IMR-90 (cell line): ENCODE measurements at regions of chr10 and their contacts with region 1.

Region 1: DNA sequence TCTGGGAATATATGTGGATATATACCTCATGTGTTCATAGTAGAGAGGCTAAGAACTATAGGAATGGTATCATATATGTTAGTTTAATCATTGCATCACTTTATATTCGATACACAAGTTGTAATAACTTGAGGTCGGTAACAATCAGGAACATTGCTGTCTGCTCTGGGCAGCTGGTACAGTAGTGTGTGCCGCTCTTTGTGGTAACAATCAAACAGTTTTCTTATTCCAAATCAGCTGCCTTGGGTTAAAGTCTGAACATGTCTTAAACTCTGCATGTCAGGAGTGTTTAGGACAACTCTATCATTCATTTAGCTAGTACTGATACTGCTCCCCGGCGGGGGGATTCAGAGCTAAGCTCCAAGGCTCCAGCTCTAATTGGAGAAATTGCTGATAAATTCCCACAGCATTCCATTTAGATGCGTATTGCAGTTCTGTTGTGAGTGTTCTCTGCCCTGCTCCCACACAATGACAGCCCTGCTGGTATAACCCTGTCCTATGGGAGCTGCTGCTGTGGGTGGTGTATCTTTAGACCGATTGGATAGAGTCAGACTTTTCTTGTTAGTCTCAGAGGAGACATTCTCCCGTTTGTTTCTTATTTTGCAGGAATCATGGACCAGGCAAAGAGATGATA is 707.5 kb upstream of the FZD8 start:
- DNase-seq: peak; percentile 91
- ATAC-seq: peak; percentile 100
- H3K4me3 ChIP-seq: no peak overlapping the region
- H3K27ac ChIP-seq: no peak overlapping the region
- H3K4me1 ChIP-seq: peaks cover 7% of the 10 kb centered on the region; the same call in 1 of the 2 replicates
- H3K27me3 ChIP-seq: no peaks in the 10 kb centered on the region
- CTCF ChIP-seq: no peak
- POLR2A ChIP-seq: no peak
- RAD21 ChIP-seq: peak; percentile 27; the same call in 1 of the 2 replicates

Region 2: DNA sequence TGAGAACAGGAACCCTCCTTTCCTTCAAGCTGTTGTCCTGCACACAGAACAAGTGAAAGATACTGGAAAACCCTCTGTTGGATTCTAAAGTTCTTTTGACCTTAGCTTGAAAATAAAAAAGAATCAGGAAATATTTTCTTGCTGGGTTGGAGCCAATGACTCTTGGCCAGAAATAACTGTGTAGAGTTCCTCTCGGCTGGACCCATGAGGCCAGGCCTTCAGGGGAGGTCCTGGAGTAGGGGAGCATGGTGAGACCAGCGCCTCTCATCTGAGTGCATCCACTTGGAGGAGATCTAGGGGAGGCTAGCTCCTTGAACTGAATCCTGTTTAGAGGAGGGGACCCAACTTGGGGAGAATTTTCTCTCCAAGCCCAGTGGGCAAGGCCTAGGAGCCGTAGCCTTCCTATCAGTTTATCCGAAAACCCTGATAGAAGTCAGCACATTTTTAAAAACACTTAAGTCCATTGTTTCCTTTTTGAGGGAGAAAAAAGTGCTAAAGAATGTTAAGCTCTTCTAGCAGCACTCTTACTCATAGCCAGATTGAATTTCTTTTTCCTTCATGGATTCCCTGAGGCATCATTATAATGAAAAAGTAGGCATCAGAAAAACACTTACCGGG is 140.2 kb after region 1 on chr10:
- CTCF ChIA-PET with region 1: no interaction called
- POLR2A ChIA-PET with region 1: no interaction called
- dilution Hi-C with region 1: no loop called
- in situ Hi-C with region 1: no loop called
- intact Hi-C with region 1: loop called (anchors 10 kb)
- DNase-seq: peak; percentile 86
- ATAC-seq: peak; percentile 65
- H3K4me3 ChIP-seq: no peak overlapping the region
- H3K27ac ChIP-seq: peak overlapping the region; percentile 88
- H3K4me1 ChIP-seq: peaks cover 20% of the 10 kb centered on the region
- H3K27me3 ChIP-seq: no peaks in the 10 kb centered on the region
- CTCF ChIP-seq: no peak
- POLR2A ChIP-seq: no peak
- RAD21 ChIP-seq: no peak

Region 3: GRCh38 chr10:36759141-36759805 is 409.7 kb after region 1 on chr10:
- CTCF ChIA-PET with region 1: no interaction called
- POLR2A ChIA-PET with region 1: no interaction called
- dilution Hi-C with region 1: no loop called
- in situ Hi-C with region 1: no loop called
- intact Hi-C with region 1: loop called (anchors 2 kb)
- DNase-seq: peak; percentile 93
- ATAC-seq: peak; percentile 94
- H3K4me3 ChIP-seq: no peak overlapping the region
- H3K27ac ChIP-seq: peak overlapping the region; percentile 69
- H3K4me1 ChIP-seq: peaks cover 5% of the 10 kb centered on the region
- H3K27me3 ChIP-seq: no peaks in the 10 kb centered on the region
- CTCF ChIP-seq: no peak
- POLR2A ChIP-seq: no peak
- RAD21 ChIP-seq: no peak